Activated CD4-positive, alpha-beta T cell treated with anti-CD3 and anti-CD28 coated beads for 36 hours (primary cell): ENCODE measurements at regions of chr1 and their contacts with region 1.

Region 1: GRCh38 chr1:154324669-154325582 is at the start of gene ATP8B2:
- DNase-seq: peak; percentile 92
- ATAC-seq: peak; percentile 70
- H3K4me3 Mint-ChIP-seq: peak within 1 kb of the TSS; percentile 99
- H3K27ac Mint-ChIP-seq: peak within 1 kb of the TSS; percentile 94
- H3K4me1 Mint-ChIP-seq: peaks cover 39% of the 10 kb centered on the region
- H3K27me3 Mint-ChIP-seq: no peaks in the 10 kb centered on the region
- total RNA-seq, gene ATP8B2: 48.2 TPM

Region 2: DNA sequence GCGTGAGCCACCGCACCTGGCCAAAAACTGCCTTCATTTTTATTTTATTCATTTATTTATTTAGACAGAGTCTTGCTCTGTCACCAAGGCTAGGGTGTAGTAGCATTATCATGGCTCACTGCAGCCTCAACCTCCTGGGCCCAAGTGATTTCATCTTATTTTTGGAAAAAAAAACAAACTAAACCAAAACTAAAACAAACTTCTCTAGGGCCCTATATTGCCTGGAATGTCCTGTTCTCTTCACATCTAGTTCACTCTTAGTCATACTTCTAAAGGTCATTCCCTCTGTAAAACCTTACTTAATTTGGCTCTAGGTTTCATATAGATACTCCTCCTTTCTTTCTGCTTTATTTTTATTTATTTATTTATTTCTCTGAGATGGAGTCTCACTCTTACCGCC is 318.8 kb before region 1 on chr1:
- CTCF ChIA-PET with region 1: no interaction called
- POLR2A ChIA-PET with region 1: no interaction called
- intact Hi-C with region 1: no loop called
- DNase-seq: no peak
- ATAC-seq: no peak
- H3K4me3 Mint-ChIP-seq: no peak overlapping the region
- H3K27ac Mint-ChIP-seq: no peak overlapping the region
- H3K4me1 Mint-ChIP-seq: no peaks in the 10 kb centered on the region
- H3K27me3 Mint-ChIP-seq: no peaks in the 10 kb centered on the region

Region 3: GRCh38 chr1:154344977-154345837 is 20.3 kb after region 1 on chr1:
- CTCF ChIA-PET with region 1: interaction called, 26 read pairs
- POLR2A ChIA-PET with region 1: no interaction called
- intact Hi-C with region 1: loop called in 1 of 2 experiments (anchors 1 kb)
- DNase-seq: peak; percentile 87
- ATAC-seq: peak; percentile 45
- H3K4me3 Mint-ChIP-seq: peak overlapping the region; percentile 37
- H3K27ac Mint-ChIP-seq: peak overlapping the region; percentile 80
- H3K4me1 Mint-ChIP-seq: peaks cover 70% of the 10 kb centered on the region
- H3K27me3 Mint-ChIP-seq: no peaks in the 10 kb centered on the region

Region 4: GRCh38 chr1:154456631-154457030 is 131.7 kb after region 1 on chr1:
- CTCF ChIA-PET with region 1: no interaction called
- POLR2A ChIA-PET with region 1: no interaction called
- intact Hi-C with region 1: no loop called
- DNase-seq: no peak
- ATAC-seq: no peak
- H3K4me3 Mint-ChIP-seq: no peak overlapping the region
- H3K27ac Mint-ChIP-seq: no peak overlapping the region
- H3K4me1 Mint-ChIP-seq: peaks cover 46% of the 10 kb centered on the region
- H3K27me3 Mint-ChIP-seq: peaks cover 3% of the 10 kb centered on the region

Region 5: GRCh38 chr1:154837672-154838171 is 512.8 kb after region 1 on chr1:
- CTCF ChIA-PET with region 1: no interaction called
- POLR2A ChIA-PET with region 1: no interaction called
- intact Hi-C with region 1: no loop called
- DNase-seq: no peak
- ATAC-seq: no peak
- H3K4me3 Mint-ChIP-seq: no peak overlapping the region
- H3K27ac Mint-ChIP-seq: no peak overlapping the region
- H3K4me1 Mint-ChIP-seq: no peaks in the 10 kb centered on the region
- H3K27me3 Mint-ChIP-seq: no peaks in the 10 kb centered on the region